ENCODE measurements at regions of chr11 and their contacts with region 1.

Region 1: DNA sequence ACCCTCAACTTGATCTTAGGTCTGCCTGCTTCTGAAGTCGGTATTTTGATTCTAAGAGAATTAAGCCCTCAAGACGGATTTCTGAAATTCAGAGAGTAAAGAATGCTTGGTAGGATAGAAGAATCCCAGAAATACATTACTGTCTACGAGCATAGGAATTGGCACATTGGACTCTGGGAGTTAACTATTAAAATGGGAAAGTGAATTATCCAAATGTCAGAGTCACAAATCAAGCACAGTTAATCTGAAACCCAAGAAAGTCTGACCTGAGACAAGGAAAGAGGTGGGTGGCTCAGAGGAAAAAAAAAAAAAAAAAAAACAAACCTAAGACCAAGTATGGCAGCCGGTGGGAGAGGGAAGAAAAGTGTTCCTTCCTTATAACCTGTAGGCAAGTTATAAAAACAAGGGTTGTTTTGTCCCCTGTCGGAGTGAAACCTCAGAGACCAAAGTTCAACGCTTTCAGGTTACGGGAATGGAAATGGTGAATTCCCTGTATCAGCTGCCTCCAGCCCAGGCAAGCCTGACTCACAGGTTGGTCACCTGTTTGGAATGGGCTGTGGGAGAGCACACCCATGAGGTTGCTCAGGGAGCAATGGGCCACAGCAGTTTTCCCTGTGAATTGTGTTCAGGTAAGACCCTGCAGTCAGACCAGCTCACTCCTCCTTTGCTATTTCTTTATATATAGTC is 139.0 kb downstream of the ETS1 start:
- DNase-seq: peak in 1 of 9 donors; percentile 17
- ATAC-seq: no peak
- H3K4me3 ChIP-seq: no peak overlapping the region
- H3K4me3 Mint-ChIP-seq: no peak overlapping the region
- H3K27ac ChIP-seq: no peak overlapping the region
- H3K27ac Mint-ChIP-seq: peak overlapping the region in 7 of 9 donors; percentile 48 to 64 (median 62)
- H3K4me1 ChIP-seq: peaks cover 0 to 8% of the 10 kb centered on the region in 2 donors
- H3K4me1 Mint-ChIP-seq: peaks cover 15 to 64% (median 38%) of the 10 kb centered on the region in 7 donors
- H3K27me3 ChIP-seq: no peaks in the 10 kb centered on the region
- H3K27me3 Mint-ChIP-seq: no peaks in the 10 kb centered on the region

Region 2: DNA sequence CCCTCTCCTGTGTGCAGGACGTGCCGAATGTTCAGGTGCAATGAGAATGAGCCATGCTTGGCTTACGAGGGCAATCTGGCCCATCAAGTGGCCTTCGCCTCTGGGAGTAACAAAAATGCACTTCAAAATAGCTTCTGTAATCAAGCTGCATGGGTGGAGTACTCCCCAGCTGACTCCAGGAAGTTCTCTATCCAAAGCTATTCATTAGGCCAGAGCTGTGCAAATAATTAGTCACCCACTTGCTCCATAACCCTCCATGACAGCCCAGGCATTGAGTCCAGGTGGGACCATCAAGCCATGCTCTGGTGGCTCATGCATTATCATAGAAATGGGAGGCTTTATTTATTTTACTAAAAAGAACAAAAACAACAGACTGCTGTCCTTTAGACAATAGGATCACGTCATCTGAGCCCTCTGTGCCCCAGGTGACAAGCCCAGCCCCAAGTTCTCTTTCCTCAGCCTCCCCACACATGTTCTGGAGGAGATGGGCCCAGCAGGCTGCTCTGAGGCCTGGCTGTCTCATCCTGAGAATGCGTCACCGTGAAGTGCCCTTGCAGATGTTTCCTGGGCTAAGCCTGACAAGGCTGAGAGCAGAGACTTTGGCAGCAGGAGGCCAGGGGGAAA is 105.7 kb before region 1 on chr11:
- CTCF ChIA-PET with region 1: no interaction called
- POLR2A ChIA-PET with region 1: no interaction called
- intact Hi-C with region 1: no loop called
- DNase-seq: peak in 5 of 9 donors; percentile 46 to 77 (median 63)
- ATAC-seq: peak; percentile 54
- H3K4me3 ChIP-seq: peak overlapping the region; percentile 57
- H3K4me3 Mint-ChIP-seq: peak overlapping the region; percentile 74 to 90 (median 84)
- H3K27ac ChIP-seq: peak overlapping the region; percentile 93
- H3K27ac Mint-ChIP-seq: peak overlapping the region; percentile 97 to 99 (median 99)
- H3K4me1 ChIP-seq: peaks cover 50 to 64% of the 10 kb centered on the region in 2 donors
- H3K4me1 Mint-ChIP-seq: peaks cover 52 to 99% (median 94%) of the 10 kb centered on the region in 7 donors
- H3K27me3 ChIP-seq: no peaks in the 10 kb centered on the region
- H3K27me3 Mint-ChIP-seq: no peaks in the 10 kb centered on the region

Region 3: DNA sequence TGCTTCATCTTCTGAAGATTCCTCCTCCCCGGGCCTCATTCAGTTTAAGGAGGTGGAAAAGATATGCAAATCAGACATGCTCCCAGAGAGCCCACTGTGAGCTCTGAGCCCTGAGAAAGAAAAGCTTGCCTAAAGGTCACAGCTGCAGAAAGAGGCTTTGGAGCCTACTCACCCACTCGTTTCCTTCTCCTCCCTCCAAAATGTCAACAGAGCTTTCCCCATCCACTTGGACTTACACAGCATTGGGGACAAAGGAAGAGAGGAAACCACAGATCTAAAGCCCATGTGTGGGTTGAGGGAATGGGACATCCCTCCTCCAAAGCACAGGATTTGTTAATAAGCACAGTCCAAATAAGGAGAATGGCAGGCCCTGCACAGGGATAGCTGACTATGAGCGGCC is 19.4 kb before region 1 on chr11:
- CTCF ChIA-PET with region 1: interaction called, 6 read pairs
- POLR2A ChIA-PET with region 1: interaction called, 3 read pairs
- intact Hi-C with region 1: loop called in 1 of 2 experiments (anchors 2 kb)
- DNase-seq: no peak
- ATAC-seq: no peak
- H3K4me3 ChIP-seq: no peak overlapping the region
- H3K4me3 Mint-ChIP-seq: peak overlapping the region in 1 of 10 donors; percentile 8
- H3K27ac ChIP-seq: no peak overlapping the region
- H3K27ac Mint-ChIP-seq: peak overlapping the region in 2 of 9 donors; percentile 18 to 36
- H3K4me1 ChIP-seq: no peaks in the 10 kb centered on the region
- H3K4me1 Mint-ChIP-seq: peaks cover 3 to 57% (median 22%) of the 10 kb centered on the region in 7 donors
- H3K27me3 ChIP-seq: no peaks in the 10 kb centered on the region
- H3K27me3 Mint-ChIP-seq: no peaks in the 10 kb centered on the region

Region 4: GRCh38 chr11:128624269-128625175 is 176.2 kb after region 1 on chr11:
- CTCF ChIA-PET with region 1: no interaction called
- POLR2A ChIA-PET with region 1: no interaction called
- intact Hi-C with region 1: no loop called
- DNase-seq: peak; percentile 40 to 78 (median 66)
- ATAC-seq: peak; percentile 79
- H3K4me3 ChIP-seq: peak overlapping the region; percentile 32
- H3K4me3 Mint-ChIP-seq: peak overlapping the region; percentile 74 to 89 (median 82)
- H3K27ac ChIP-seq: peak overlapping the region; percentile 73
- H3K27ac Mint-ChIP-seq: peak overlapping the region; percentile 95 to 100 (median 98)
- H3K4me1 ChIP-seq: peaks cover 52 to 84% of the 10 kb centered on the region in 2 donors
- H3K4me1 Mint-ChIP-seq: peaks cover 82 to 100% (median 99%) of the 10 kb centered on the region in 7 donors
- H3K27me3 ChIP-seq: no peaks in the 10 kb centered on the region
- H3K27me3 Mint-ChIP-seq: no peaks in the 10 kb centered on the region